ENCODE measurements at regions of chr2 and their contacts with region 1.

Region 1: GRCh38 chr2:61764035-61764800 is 89.6 kb downstream of the FAM161A start:
- DNase-seq: peak; percentile 99
- H3K4me3 Mint-ChIP-seq: peak overlapping the region; percentile 90
- H3K27ac Mint-ChIP-seq: peak overlapping the region; percentile 95
- H3K4me1 Mint-ChIP-seq: peaks cover 17% of the 10 kb centered on the region
- H3K27me3 Mint-ChIP-seq: peaks cover under 1% of the 10 kb centered on the region

Region 2: GRCh38 chr2:61144697-61145268 is 619.4 kb before region 1 on chr2:
- CTCF ChIA-PET with region 1: no interaction called
- POLR2A ChIA-PET with region 1: no interaction called
- intact Hi-C with region 1: loop called (anchors 1 kb)
- DNase-seq: peak; percentile 96
- H3K4me3 Mint-ChIP-seq: peak overlapping the region; percentile 91
- H3K27ac Mint-ChIP-seq: peak overlapping the region; percentile 85
- H3K4me1 Mint-ChIP-seq: peaks cover 3% of the 10 kb centered on the region
- H3K27me3 Mint-ChIP-seq: peaks cover 1% of the 10 kb centered on the region

Region 3: GRCh38 chr2:61470965-61471904 is 293.0 kb before region 1 on chr2 and contains the start of gene USP34:
- CTCF ChIA-PET with region 1: no interaction called
- POLR2A ChIA-PET with region 1: no interaction called
- intact Hi-C with region 1: loop called (anchors 1 kb)
- DNase-seq: peak; percentile 95
- H3K4me3 Mint-ChIP-seq: peak within 1 kb of the TSS; percentile 93
- H3K27ac Mint-ChIP-seq: peak within 1 kb of the TSS; percentile 94
- H3K4me1 Mint-ChIP-seq: peaks cover 27% of the 10 kb centered on the region
- H3K27me3 Mint-ChIP-seq: no peaks in the 10 kb centered on the region
- total RNA-seq, gene USP34: 61.1 to 69.4 TPM

Region 4: GRCh38 chr2:61694312-61695274 is 69.6 kb before region 1 on chr2:
- CTCF ChIA-PET with region 1: no interaction called
- POLR2A ChIA-PET with region 1: no interaction called
- intact Hi-C with region 1: loop called (anchors 1 kb)
- DNase-seq: peak; percentile 90
- H3K4me3 Mint-ChIP-seq: peak overlapping the region; percentile 79
- H3K27ac Mint-ChIP-seq: peak overlapping the region; percentile 64
- H3K4me1 Mint-ChIP-seq: peaks cover 11% of the 10 kb centered on the region
- H3K27me3 Mint-ChIP-seq: no peaks in the 10 kb centered on the region

Region 5: DNA sequence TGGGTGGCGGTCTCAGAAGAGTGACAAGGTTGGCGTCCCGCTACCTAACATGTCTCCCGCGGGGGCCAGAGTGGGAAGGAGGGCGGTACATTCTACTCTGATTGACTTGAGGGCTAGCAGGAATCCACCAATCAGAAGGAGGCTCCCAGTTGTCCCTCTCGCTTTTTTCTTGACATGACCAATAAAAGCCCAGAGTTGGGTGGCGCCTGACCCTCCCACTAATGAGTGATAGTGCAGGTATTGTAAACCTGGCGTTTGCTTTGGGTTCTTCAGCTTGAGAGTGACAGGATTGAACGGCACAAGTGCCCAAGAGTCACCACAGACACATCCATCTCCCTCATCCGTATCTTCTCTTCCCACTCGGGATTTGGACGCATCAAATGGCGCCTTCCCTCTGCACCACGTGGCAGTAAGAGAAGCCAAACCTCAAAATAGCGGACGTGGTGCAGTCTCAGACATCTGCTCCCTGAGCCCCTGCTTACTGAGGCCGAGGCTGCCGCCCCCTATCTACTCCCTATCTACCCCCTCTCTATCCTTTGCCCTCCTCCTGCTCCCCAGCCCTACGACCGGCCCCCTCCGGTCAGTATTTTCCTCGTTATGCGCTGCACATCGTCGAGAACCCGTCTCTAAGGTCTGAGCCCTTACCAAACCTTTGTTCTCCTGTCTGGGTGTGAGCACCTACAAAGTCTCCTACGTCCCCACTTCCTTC is 90.4 kb after region 1 on chr2:
- CTCF ChIA-PET with region 1: interaction called, 3 read pairs
- POLR2A ChIA-PET with region 1: no interaction called
- intact Hi-C with region 1: loop called (anchors 1 kb)
- DNase-seq: peak; percentile 93
- H3K4me3 Mint-ChIP-seq: peak overlapping the region; percentile 91
- H3K27ac Mint-ChIP-seq: peak overlapping the region; percentile 90
- H3K4me1 Mint-ChIP-seq: peaks cover 19% of the 10 kb centered on the region
- H3K27me3 Mint-ChIP-seq: no peaks in the 10 kb centered on the region

Region 6: DNA sequence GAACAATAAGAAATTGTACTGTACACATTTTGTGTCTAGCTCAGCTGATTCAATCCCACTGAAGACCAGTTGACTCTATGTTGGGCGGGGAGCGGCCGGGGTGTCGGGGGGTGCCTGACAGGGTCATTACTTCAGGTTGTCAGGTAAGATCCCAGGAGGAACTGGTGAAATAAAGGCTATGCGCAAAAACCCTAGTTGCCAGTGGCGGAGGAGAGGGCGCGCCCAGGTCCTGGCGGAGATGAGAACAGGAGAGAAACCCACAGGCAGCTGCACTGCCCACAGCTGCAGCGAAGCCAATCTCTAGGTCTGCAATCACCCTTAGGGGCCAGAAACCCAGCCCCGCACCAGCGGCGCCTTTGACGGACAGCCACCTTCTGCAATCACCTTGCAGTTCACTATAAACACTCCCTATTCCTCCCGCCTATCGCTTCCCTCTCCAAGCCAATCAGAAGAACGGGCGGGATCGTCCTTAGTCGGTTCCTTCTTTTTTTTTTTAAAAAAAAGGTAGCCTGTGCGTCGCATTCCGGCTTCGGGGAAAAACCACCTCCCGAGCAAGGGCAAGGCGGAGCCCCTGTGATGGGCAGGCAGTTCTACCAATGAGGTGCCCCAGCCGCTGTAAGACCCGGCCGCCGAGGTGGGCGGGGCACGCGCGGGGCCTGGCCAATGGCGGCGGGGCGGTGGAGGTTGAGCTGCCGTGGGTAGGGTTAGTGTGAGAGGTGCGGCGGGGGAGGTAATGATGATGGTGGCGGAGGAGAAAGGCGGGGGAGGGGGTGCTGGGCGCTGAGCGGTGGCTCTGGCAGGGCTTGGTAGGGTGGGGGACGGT is 941.0 kb after region 1 on chr2 and contains the start of gene EHBP1:
- CTCF ChIA-PET with region 1: no interaction called
- POLR2A ChIA-PET with region 1: no interaction called
- intact Hi-C with region 1: loop called (anchors 5 kb)
- DNase-seq: peak; percentile 98
- H3K4me3 Mint-ChIP-seq: peak within 1 kb of the TSS; percentile 76
- H3K27ac Mint-ChIP-seq: peak within 1 kb of the TSS; percentile 74
- H3K4me1 Mint-ChIP-seq: peaks cover 28% of the 10 kb centered on the region
- H3K27me3 Mint-ChIP-seq: no peaks in the 10 kb centered on the region
- total RNA-seq, gene EHBP1: 23.5 to 23.6 TPM